WTC11 (cell line): ENCODE measurements at regions of chr1 and their contacts with region 1.

Region 1: GRCh38 chr1:54406339-54407153 is at the start of gene SSBP3:
- DNase-seq: peak; percentile 92
- ATAC-seq: peak; percentile 81
- H3K4me3 Mint-ChIP-seq: peak within 1 kb of the TSS; percentile 88
- H3K27ac Mint-ChIP-seq: peak within 1 kb of the TSS; percentile 99
- H3K4me1 Mint-ChIP-seq: peaks cover 69% of the 10 kb centered on the region
- H3K27me3 Mint-ChIP-seq: peaks cover 6% of the 10 kb centered on the region; the same call in 1 of the 2 replicates
- CTCF ChIP-seq: no peak
- total RNA-seq, gene SSBP3: 98.8 to 115 TPM (median 105 TPM) in 3 replicates

Region 2: DNA sequence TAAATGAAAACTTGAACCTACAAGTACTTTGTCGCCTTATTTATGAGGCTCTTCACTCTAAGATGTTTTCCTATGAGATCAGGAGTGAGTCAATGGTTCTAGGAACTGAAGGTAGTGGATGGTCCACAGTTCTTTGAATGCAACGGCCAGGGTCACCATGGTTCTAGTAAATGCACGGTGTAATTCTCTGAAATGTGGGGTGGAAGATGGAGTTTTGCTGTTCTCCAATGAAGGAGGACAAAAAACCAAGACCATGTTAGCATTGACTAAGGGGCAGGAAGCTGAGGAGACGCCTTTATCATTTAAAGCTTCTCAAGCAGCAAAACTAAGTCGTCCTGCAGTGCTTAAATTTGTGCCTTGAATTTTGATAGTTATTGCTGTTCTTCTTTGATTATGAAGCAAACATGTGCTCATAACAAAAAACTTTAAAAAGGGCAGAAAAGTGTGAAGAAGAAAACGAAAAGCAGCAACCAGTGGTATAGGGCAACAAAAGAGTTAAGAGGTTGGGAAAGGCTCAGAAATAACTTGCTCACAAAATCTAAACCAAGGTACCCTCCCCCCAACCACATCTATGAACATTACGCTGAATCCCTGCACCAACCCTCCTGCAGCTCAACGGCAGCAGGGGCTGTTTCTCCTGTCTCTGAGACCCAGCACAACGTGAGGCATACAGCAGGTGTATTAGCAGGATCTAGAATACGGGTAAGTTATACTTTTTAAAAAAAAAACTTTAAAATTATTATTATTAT is 121.6 kb before region 1 on chr1:
- CTCF ChIA-PET with region 1: no interaction called
- POLR2A ChIA-PET with region 1: no interaction called
- DNase-seq: no peak
- ATAC-seq: peak; percentile 19
- H3K4me3 Mint-ChIP-seq: no peak overlapping the region
- H3K27ac Mint-ChIP-seq: peak overlapping the region; percentile 83
- H3K4me1 Mint-ChIP-seq: peaks cover 66% of the 10 kb centered on the region
- H3K27me3 Mint-ChIP-seq: no peaks in the 10 kb centered on the region
- CTCF ChIP-seq: no peak

Region 3: DNA sequence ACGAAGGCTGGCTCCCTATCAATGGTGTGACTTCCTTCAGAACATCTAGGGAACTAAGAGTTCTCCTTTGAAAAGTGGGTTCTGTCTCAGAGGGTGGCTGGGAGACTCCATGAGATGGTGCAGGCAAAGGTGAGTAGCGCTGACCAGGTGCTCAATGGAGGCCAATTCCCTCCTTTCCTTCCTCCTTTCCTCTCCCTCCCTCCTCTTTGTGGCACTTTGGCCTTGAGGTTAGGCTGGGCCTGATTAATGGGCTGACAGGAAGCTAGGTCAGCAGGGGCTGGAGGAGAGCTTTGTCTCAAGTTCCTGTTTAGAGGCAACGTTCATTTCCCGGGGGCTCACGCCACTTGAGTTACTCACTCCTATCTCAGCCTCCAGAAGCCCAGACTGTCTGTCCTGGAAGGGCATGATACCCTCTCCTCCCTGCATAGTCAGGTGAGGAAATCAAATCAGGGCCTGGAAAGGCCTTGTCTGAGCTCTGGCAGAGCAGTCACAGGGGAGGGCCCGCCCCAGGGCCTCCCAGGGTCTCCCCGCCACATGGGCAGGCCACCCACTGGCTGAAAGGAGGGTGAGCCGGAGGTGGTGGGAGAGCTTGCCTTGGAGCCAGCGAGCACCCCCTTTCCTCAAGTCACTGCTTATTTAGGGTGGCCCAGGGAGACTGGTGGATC is 58.1 kb after region 1 on chr1:
- CTCF ChIA-PET with region 1: interaction called, 14 read pairs
- POLR2A ChIA-PET with region 1: interaction called, 18 read pairs
- DNase-seq: no peak
- ATAC-seq: peak; percentile 59
- H3K4me3 Mint-ChIP-seq: no peak overlapping the region
- H3K27ac Mint-ChIP-seq: peak overlapping the region; percentile 63
- H3K4me1 Mint-ChIP-seq: peaks cover 75% of the 10 kb centered on the region
- H3K27me3 Mint-ChIP-seq: peaks cover 5% of the 10 kb centered on the region
- CTCF ChIP-seq: no peak

Region 4: GRCh38 chr1:54474639-54475251 is 68.2 kb after region 1 on chr1:
- CTCF ChIA-PET with region 1: interaction called, 4 read pairs
- POLR2A ChIA-PET with region 1: interaction called, 20 read pairs
- DNase-seq: peak; percentile 75
- ATAC-seq: peak; percentile 60
- H3K4me3 Mint-ChIP-seq: peak overlapping the region; percentile 70
- H3K27ac Mint-ChIP-seq: peak overlapping the region; percentile 80
- H3K4me1 Mint-ChIP-seq: peaks cover 65% of the 10 kb centered on the region
- H3K27me3 Mint-ChIP-seq: peaks cover 37% of the 10 kb centered on the region
- CTCF ChIP-seq: no peak

Region 5: DNA sequence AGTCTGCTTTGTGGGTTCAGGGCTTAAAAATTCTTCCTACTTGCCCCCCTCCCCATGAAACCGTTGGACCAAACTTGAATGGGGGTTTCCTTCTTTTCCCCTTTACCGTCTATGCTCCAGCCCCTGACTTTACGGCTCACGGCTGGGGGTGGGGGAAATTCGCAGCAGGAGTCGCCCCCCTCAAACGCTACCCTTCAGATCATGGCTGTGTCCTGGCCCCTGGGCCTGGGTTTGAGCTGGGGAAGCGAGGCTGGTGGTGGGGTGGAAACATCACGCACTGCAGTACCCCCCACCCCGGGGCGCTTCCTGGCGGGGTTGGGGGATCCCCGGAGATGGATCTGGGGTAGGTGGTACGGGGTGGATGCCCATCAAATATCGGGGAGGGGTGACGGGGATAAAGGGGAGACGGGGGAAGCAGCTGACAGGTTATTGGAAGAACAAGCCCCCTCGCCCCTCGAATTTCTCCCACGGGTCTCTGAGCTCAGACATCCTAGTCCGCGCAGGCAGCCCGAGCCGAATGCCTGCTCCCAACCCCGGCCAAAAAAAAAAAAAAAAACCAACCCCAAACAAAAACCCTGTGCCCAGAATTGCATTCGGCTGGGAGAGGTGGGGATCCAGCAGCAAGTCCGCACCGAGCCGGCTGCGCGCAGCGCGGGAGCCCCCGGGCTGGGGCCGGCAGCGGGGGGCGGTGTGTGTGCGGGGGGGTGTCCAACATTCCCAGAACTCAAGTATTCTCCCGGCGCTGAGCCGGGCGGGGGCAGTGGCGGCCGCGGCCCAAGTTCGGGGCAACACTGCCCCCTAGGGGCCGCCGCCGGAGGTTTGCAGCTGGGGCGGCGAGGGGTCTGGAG is 82.5 kb after region 1 on chr1:
- CTCF ChIA-PET with region 1: interaction called, 145 read pairs
- POLR2A ChIA-PET with region 1: interaction called, 127 read pairs
- DNase-seq: peak; percentile 91
- ATAC-seq: peak; percentile 49
- H3K4me3 Mint-ChIP-seq: peak overlapping the region; percentile 81
- H3K27ac Mint-ChIP-seq: peak overlapping the region; percentile 86
- H3K4me1 Mint-ChIP-seq: peaks cover 32% of the 10 kb centered on the region
- H3K27me3 Mint-ChIP-seq: peaks cover 13% of the 10 kb centered on the region
- CTCF ChIP-seq: peak; percentile 95

Region 6: GRCh38 chr1:54581621-54582035 is 175.1 kb after region 1 on chr1:
- CTCF ChIA-PET with region 1: no interaction called
- POLR2A ChIA-PET with region 1: no interaction called
- DNase-seq: no peak
- ATAC-seq: peak; percentile 20
- H3K4me3 Mint-ChIP-seq: no peak overlapping the region
- H3K27ac Mint-ChIP-seq: no peak overlapping the region
- H3K4me1 Mint-ChIP-seq: peaks cover 30% of the 10 kb centered on the region
- H3K27me3 Mint-ChIP-seq: no peaks in the 10 kb centered on the region
- CTCF ChIP-seq: no peak